CD8-positive, alpha-beta T cell (primary cell): ENCODE measurements at regions of chr5 and their contacts with region 1.

Region 1: DNA sequence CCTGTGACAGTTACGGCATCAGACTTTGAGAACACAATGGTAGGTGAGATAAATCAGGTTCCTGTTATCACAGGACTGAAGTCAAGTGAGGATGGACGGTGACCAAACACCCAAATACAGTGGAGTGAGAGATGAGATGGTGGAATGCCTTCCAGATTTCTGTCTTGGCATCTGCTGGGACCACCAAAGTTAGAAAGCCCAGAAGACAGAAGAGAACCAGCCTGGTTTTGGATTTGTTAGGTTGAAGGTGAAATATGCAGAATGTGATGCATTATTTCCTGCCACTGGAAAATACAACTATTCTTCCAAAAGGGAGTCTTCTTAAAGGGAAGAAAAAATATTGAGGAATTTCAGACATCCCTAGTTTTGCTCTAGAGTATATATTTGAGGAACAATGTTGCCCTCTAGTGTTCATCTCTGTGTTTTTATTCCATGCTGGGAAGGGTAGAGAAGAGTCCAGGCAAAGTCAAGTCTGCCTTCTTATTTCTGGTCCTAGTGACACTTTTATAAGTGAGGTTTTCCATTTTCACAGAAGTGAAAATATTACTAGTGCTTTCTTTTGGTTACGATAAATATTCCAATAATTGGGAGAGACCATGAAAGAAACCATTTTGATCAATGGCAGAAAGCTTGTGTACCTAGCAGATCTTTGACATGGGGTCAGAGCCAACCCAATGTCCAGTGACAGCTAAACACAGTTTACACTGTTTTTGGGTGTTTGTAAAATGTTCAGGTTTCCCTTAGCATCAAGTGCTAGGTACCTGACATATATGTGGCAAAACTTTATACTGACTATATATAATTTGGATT is 142.3 kb upstream of the ANKH start:
- DNase-seq: peak in 2 of 9 experiments; percentile 44 to 59
- ATAC-seq: peak; percentile 44
- H3K4me3 ChIP-seq: no peak overlapping the region
- H3K4me3 Mint-ChIP-seq: no peak overlapping the region
- H3K27ac ChIP-seq: no peak overlapping the region
- H3K27ac Mint-ChIP-seq: no peak overlapping the region
- H3K4me1 ChIP-seq: no peaks in the 10 kb centered on the region
- H3K4me1 Mint-ChIP-seq: no peaks in the 10 kb centered on the region
- H3K27me3 ChIP-seq: no peaks in the 10 kb centered on the region
- H3K27me3 Mint-ChIP-seq: peaks cover 3% of the 10 kb centered on the region
- CTCF ChIP-seq: peak; percentile 74

Region 2: DNA sequence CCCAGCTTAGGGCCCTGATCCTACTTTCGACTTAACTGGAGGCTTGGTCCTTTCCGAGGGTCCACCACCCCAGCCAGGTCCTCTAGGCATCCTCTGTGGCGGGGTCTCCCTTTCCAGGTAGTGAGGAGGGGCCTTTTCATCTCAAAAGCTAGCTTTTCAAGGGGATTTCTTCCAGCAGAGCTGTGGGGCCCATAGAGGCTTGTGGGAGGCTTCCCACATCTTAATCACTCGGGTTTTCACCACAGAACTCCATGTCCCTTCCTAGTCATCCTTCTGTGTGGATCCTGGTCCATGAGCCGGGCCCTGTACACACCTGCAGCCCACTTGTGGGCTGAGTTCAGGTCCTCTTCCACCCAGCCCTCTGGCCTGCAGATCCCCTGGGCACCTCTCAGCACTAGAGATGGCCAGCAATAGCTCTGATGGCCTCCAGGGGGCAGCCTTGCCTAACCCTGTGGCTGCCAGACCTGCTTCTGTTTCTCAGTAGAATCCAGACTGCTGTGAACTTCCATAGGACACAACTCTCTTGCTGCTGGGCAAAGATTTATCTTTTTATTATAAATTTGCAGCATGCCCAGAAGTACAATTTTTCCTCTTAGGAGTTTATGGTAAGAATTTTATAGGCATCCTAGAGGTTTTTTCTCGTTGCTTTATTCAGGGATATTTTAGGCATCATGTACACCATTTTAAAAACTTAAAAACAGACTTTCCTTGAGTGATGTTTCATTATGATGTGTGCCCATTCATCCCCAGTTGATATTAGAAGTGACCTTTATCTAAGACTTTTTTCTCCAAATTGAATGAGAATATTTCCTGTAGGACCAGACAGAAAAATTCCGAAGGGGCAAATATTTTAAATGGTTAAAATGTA is 661.8 kb before region 1 on chr5:
- CTCF ChIA-PET with region 1: interaction called, 3 read pairs
- POLR2A ChIA-PET with region 1: no interaction called
- intact Hi-C with region 1: loop called in 1 of 2 experiments (anchors 5 kb)
- DNase-seq: peak; percentile 26 to 76 (median 59)
- ATAC-seq: peak; percentile 95
- H3K4me3 ChIP-seq: no peak overlapping the region
- H3K4me3 Mint-ChIP-seq: no peak overlapping the region
- H3K27ac ChIP-seq: no peak overlapping the region
- H3K27ac Mint-ChIP-seq: no peak overlapping the region
- H3K4me1 ChIP-seq: no peaks in the 10 kb centered on the region
- H3K4me1 Mint-ChIP-seq: no peaks in the 10 kb centered on the region
- H3K27me3 ChIP-seq: no peaks in the 10 kb centered on the region
- H3K27me3 Mint-ChIP-seq: peaks cover 3% of the 10 kb centered on the region
- CTCF ChIP-seq: peak; percentile 87

Region 3: GRCh38 chr5:14946815-14947640 is 66.8 kb before region 1 on chr5:
- CTCF ChIA-PET with region 1: interaction called, 9 read pairs
- POLR2A ChIA-PET with region 1: no interaction called
- intact Hi-C with region 1: loop called in 1 of 2 experiments (anchors 2 kb)
- DNase-seq: peak in 7 of 9 experiments; percentile 15 to 76 (median 38)
- ATAC-seq: peak; percentile 97
- H3K4me3 ChIP-seq: no peak overlapping the region
- H3K4me3 Mint-ChIP-seq: no peak overlapping the region
- H3K27ac ChIP-seq: no peak overlapping the region
- H3K27ac Mint-ChIP-seq: no peak overlapping the region
- H3K4me1 ChIP-seq: no peaks in the 10 kb centered on the region
- H3K4me1 Mint-ChIP-seq: peaks cover 4% of the 10 kb centered on the region
- H3K27me3 ChIP-seq: no peaks in the 10 kb centered on the region
- H3K27me3 Mint-ChIP-seq: peaks cover 14% of the 10 kb centered on the region
- CTCF ChIP-seq: peak; percentile 68